GM10248 (cell line): ENCODE measurements at regions of chr6 and their contacts with region 1.

Region 1: DNA sequence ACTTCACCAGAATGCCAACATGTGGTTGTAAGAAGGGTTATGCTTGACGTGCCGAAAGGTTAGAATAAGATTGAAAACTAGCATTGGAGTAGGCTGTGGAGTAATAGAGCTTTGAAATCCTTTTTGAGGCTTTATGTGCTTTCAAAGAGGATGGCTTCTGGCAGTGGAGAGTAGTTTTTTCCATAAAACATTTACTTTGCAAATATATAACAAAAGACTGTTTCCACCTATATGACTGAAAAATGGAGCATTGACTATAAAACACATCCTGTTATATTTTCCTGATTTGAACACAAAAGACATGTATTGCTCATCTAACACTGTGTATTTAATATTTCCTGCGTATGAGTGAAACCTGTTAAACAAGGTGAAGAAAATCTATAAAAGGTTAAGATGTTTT is 38.8 kb downstream of the ZFAND3 start:
- DNase-seq: no peak
- CTCF ChIP-seq: no peak

Region 2: GRCh38 chr6:37442416-37443215 is 415.7 kb before region 1 on chr6:
- CTCF ChIA-PET with region 1: no interaction called
- POLR2A ChIA-PET with region 1: no interaction called
- DNase-seq: no peak
- CTCF ChIP-seq: no peak

Region 3: GRCh38 chr6:37845026-37845911 is 13.1 kb before region 1 on chr6:
- CTCF ChIA-PET with region 1: interaction called, 13 read pairs
- POLR2A ChIA-PET with region 1: interaction called, 3 read pairs
- DNase-seq: no peak
- CTCF ChIP-seq: no peak

Region 4: DNA sequence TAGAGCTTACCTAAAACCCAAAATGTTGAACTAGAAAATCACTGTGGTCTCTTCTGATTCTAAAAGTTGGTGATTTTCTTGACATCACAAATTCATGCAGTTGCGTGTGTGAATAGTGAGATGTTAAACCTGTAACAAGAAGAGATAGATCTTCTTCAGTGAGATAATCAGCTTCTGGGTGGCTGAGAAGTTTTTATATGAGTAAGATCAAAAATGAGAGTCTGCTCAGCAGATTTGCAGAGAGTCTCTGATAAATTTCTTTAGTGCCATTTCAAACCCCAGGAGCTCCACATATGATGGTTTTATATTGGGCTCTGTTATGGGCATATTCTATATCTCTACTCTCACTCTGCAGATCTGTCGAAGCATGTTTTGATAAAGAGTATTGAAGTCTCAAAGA is 146.5 kb after region 1 on chr6:
- CTCF ChIA-PET with region 1: no interaction called
- POLR2A ChIA-PET with region 1: no interaction called
- DNase-seq: no peak
- CTCF ChIP-seq: no peak